ENCODE measurements at regions of chr10 and their contacts with region 1.

Region 1: GRCh38 chr10:111076191-111076681 is 593 bp upstream of the ADRA2A start:
- DNase-seq: peak; percentile 71
- H3K4me3 Mint-ChIP-seq: peak overlapping the region; percentile 88
- H3K27ac Mint-ChIP-seq: no peak overlapping the region
- H3K4me1 Mint-ChIP-seq: peaks cover 7% of the 10 kb centered on the region
- H3K27me3 Mint-ChIP-seq: peaks cover 37% of the 10 kb centered on the region
- CTCF ChIP-seq: peak; percentile 75

Region 2: DNA sequence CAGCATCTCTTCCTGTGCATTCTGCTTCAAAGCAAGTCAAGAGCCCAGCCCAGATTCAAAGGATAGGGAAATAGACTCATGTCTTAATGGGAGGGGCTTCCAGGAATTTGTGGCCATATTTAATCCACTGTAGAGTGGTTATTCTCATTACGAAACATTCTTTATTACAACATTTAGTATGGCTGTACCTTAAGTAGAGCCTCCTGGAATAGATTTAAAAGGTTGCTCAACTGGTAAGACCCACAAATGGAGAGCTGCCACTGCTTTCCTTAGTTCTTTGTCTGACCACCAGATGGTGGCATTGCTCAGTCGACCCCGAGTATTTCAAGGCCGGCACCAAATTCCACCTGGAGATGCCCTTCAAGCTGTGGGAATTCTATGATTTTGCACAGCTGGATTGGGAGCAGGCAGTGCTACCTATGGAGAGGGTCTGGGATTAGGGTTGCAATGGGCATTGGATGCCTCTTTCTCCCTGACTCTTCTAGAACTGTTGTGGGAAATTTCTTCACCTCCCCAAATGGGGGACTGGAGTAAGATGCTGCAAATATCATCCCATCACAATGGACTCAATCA is 329.9 kb before region 1 on chr10:
- CTCF ChIA-PET with region 1: interaction called, 4 read pairs
- intact Hi-C with region 1: loop called (anchors 5 kb)
- DNase-seq: peak; percentile 64
- H3K4me3 Mint-ChIP-seq: no peak overlapping the region
- H3K27ac Mint-ChIP-seq: no peak overlapping the region
- H3K4me1 Mint-ChIP-seq: no peaks in the 10 kb centered on the region
- H3K27me3 Mint-ChIP-seq: peaks cover 27% of the 10 kb centered on the region
- CTCF ChIP-seq: peak; percentile 55

Region 3: GRCh38 chr10:111207500-111207899 is 131.3 kb after region 1 on chr10:
- CTCF ChIA-PET with region 1: interaction called, 15 read pairs
- intact Hi-C with region 1: loop called (anchors 1 kb)
- DNase-seq: peak; percentile 51
- H3K4me3 Mint-ChIP-seq: no peak overlapping the region
- H3K27ac Mint-ChIP-seq: no peak overlapping the region
- H3K4me1 Mint-ChIP-seq: peaks cover 9% of the 10 kb centered on the region
- H3K27me3 Mint-ChIP-seq: no peaks in the 10 kb centered on the region
- CTCF ChIP-seq: peak; percentile 35

Region 4: GRCh38 chr10:111323389-111323966 is 247.2 kb after region 1 on chr10:
- CTCF ChIA-PET with region 1: interaction called, 8 read pairs
- intact Hi-C with region 1: loop called (anchors 1 kb)
- DNase-seq: no peak
- H3K4me3 Mint-ChIP-seq: no peak overlapping the region
- H3K27ac Mint-ChIP-seq: no peak overlapping the region
- H3K4me1 Mint-ChIP-seq: no peaks in the 10 kb centered on the region
- H3K27me3 Mint-ChIP-seq: peaks cover 17% of the 10 kb centered on the region
- CTCF ChIP-seq: no peak

Region 5: DNA sequence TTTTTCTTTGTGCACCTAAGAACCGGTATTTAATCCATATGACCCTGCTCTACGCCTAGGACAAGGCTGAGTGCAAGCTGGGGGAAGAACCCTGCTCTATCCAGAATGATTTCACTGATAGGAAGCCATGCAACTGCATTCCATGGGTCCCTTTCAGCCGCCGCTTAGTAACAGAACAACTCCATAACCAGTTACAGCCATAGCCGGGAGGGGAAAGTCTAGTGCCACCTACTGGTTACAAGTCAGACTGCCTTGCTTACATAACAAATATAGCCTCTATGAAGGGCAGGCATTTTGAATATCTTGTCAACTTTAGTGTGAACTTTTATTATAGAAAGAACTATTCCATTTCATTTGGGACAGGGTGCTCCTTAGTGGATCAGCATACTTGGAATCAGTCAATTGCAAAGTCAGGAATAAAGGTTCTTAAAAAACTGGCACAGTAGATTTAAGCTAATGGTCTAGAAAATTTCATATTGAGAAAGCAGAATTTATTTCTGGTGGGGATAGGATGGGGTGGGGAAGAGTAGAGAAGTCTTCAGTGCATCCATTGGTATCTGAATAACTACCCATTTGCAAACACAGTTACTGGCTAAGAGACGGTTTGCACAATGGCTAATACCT is 522.3 kb after region 1 on chr10:
- CTCF ChIA-PET with region 1: interaction called, 3 read pairs
- intact Hi-C with region 1: loop called (anchors 5 kb)
- DNase-seq: peak; percentile 40
- H3K4me3 Mint-ChIP-seq: no peak overlapping the region
- H3K27ac Mint-ChIP-seq: no peak overlapping the region
- H3K4me1 Mint-ChIP-seq: no peaks in the 10 kb centered on the region
- H3K27me3 Mint-ChIP-seq: no peaks in the 10 kb centered on the region
- CTCF ChIP-seq: no peak